Activated T-helper 1 cell treated with anti-CD3 and anti-CD28 coated beads, Interleukin-12 subunit alpha, Interleukin-12 subunit beta, Interleukin-2, Interleukin-4 antibody, amounts not matched to agents 30 ng/mL and 10 ng/mL and 1 ng/mL, durations not matched to agents 14 hours and 24 hours and 36 hours (primary cell): ENCODE measurements at regions of chr12 and their contacts with region 1.

Region 1: DNA sequence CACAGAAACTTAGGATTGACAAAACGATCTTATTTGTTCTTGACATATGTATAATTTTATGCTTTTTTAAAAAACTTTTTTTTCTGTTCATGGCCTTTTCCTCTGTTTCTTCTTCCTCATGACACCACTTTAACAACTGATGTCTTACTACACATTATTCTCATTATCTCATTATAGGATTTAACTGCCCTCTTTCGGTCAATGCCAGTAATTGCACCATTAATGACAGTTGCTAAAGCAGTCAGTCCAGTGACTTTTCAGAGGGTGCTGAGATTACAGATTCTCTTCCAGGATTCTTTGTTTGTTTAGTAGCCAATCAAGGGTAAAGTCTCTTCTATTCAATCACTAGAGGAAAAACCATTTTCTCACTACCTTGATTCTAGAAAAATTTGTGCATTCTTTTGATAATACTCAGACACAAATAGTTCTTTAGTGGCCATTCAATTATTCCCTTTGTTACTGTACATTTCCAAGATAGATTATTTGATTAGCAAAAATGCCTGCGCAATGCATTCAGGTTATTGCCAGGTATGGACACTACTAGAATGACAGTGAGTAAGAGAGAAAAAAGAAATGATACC is 50.1 kb downstream of the KLRG1 start:
- DNase-seq: no peak
- H3K4me3 Mint-ChIP-seq: no peak overlapping the region
- H3K27ac Mint-ChIP-seq: no peak overlapping the region
- H3K4me1 Mint-ChIP-seq: peaks cover 30% of the 10 kb centered on the region
- H3K27me3 Mint-ChIP-seq: peaks cover 12% of the 10 kb centered on the region

Region 2: DNA sequence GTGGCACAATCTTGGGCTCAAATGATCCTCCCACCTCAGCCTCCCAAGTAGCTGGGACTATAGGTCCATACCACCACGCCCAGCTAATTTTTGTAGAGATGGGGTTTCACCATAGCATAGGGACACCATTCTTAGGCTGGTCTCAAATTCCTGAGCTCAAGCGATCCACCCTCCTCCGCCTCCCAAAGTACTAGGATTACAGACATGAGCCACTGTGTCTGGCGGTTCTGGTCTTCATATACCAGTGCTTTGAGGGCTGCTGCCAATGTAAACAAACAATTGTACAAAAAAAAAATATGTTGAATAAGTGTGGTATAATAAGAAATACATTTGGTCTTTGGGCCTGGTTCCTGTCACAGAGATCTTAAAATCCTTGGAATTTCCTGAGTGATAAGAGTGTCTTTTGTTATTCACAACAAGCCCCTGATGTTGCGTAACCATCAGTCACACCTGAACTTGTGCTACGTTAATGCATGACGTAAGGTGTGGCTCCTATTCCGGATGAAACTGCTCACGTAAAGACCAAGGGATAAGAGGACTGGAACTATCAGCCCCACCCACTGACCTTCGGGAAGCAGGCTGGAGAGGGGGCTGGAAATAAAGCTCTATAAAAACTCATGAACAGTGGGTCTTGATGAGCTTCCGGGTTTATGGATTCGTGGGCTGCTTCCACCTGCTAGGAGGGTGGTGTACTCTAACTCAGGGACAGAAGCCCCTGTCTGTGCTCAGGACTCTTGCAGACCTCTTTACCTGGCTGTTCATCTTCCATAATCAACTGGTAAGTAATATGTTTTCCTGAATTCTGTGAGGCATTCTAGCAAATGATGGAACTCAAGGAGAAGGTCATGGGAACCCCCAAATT is 358.2 kb before region 1 on chr12:
- intact Hi-C with region 1: loop called (anchors 1 kb)
- DNase-seq: no peak
- H3K4me3 Mint-ChIP-seq: no peak overlapping the region
- H3K27ac Mint-ChIP-seq: no peak overlapping the region
- H3K4me1 Mint-ChIP-seq: no peaks in the 10 kb centered on the region
- H3K27me3 Mint-ChIP-seq: peaks cover 12% of the 10 kb centered on the region

Region 3: DNA sequence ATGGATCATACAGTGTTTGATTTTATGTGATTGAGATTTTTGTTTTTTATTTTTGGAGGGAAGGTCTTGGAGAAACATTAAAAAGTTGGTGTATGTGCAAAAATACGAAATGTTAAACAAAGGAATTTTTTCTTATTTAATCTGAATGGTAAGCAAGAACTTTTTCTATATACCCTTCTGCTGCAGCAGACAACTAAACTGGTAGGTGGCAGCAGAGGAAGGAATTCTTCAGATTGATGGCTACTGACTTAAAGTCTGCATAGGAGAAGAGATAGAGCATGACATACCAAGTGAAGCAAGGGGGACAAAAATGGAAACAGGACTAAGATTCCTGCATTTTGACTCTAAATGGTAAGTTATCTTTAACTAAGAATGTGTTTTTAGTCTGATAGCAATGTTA is 259.1 kb before region 1 on chr12:
- intact Hi-C with region 1: loop called (anchors 2 kb)
- DNase-seq: no peak
- H3K4me3 Mint-ChIP-seq: no peak overlapping the region
- H3K27ac Mint-ChIP-seq: no peak overlapping the region
- H3K4me1 Mint-ChIP-seq: no peaks in the 10 kb centered on the region
- H3K27me3 Mint-ChIP-seq: no peaks in the 10 kb centered on the region

Region 4: GRCh38 chr12:8914716-8915526 is 124.6 kb before region 1 on chr12:
- intact Hi-C with region 1: loop called (anchors 1 kb)
- DNase-seq: peak; percentile 56
- H3K4me3 Mint-ChIP-seq: no peak overlapping the region
- H3K27ac Mint-ChIP-seq: no peak overlapping the region
- H3K4me1 Mint-ChIP-seq: peaks cover 8% of the 10 kb centered on the region
- H3K27me3 Mint-ChIP-seq: peaks cover 21% of the 10 kb centered on the region

Region 5: GRCh38 chr12:8996682-8997360 is 42.7 kb before region 1 on chr12:
- intact Hi-C with region 1: loop called (anchors 5 kb)
- DNase-seq: peak; percentile 6
- H3K4me3 Mint-ChIP-seq: no peak overlapping the region
- H3K27ac Mint-ChIP-seq: no peak overlapping the region
- H3K4me1 Mint-ChIP-seq: peaks cover 24% of the 10 kb centered on the region
- H3K27me3 Mint-ChIP-seq: peaks cover 14% of the 10 kb centered on the region

Region 6: GRCh38 chr12:9049520-9050133 is 10.1 kb after region 1 on chr12:
- intact Hi-C with region 1: no loop called
- DNase-seq: no peak
- H3K4me3 Mint-ChIP-seq: no peak overlapping the region
- H3K27ac Mint-ChIP-seq: no peak overlapping the region
- H3K4me1 Mint-ChIP-seq: no peaks in the 10 kb centered on the region
- H3K27me3 Mint-ChIP-seq: peaks cover 18% of the 10 kb centered on the region